SK-N-SH (cell line): ENCODE measurements at regions of chr17 and their contacts with region 1.

Region 1: GRCh38 chr17:32253117-32253611 is 12.5 kb upstream of the RHBDL3 start:
- DNase-seq: peak; percentile 82
- H3K4me3 ChIP-seq: no peak overlapping the region; a peak in 1 of 4 replicates
- H3K27ac ChIP-seq: no peak overlapping the region
- H3K4me1 ChIP-seq: no peaks in the 10 kb centered on the region
- H3K27me3 ChIP-seq: no peaks in the 10 kb centered on the region
- CTCF ChIP-seq: peak; percentile 98
- EP300 ChIP-seq: no peak
- RAD21 ChIP-seq: peak; percentile 99

Region 2: DNA sequence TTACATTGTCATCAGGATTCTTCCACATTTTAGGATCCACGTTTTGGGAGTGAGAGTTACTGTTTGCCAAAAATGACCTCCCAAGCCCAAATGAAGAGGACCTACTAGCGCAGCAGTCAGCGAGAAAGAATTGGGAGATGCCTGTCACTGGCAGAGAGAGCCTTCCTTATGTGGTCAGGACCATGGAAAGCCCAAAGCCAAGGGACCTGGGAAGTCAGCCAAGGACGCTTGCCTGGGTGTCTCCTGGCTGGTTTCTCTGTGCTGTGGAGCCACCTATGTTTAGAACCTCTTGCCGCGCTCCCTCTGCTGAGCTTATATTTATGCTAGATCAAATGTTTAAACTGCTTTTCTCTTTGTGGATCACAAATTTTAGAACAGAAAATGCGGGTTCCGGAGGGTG is 12.4 kb before region 1 on chr17:
- CTCF ChIA-PET with region 1: interaction called, 22 read pairs
- POLR2A ChIA-PET with region 1: no interaction called
- DNase-seq: no peak
- H3K4me3 ChIP-seq: no peak overlapping the region
- H3K27ac ChIP-seq: no peak overlapping the region
- H3K4me1 ChIP-seq: no peaks in the 10 kb centered on the region; a peak in 1 of 4 replicates
- H3K27me3 ChIP-seq: no peaks in the 10 kb centered on the region
- CTCF ChIP-seq: no peak
- EP300 ChIP-seq: no peak
- RAD21 ChIP-seq: no peak

Region 3: DNA sequence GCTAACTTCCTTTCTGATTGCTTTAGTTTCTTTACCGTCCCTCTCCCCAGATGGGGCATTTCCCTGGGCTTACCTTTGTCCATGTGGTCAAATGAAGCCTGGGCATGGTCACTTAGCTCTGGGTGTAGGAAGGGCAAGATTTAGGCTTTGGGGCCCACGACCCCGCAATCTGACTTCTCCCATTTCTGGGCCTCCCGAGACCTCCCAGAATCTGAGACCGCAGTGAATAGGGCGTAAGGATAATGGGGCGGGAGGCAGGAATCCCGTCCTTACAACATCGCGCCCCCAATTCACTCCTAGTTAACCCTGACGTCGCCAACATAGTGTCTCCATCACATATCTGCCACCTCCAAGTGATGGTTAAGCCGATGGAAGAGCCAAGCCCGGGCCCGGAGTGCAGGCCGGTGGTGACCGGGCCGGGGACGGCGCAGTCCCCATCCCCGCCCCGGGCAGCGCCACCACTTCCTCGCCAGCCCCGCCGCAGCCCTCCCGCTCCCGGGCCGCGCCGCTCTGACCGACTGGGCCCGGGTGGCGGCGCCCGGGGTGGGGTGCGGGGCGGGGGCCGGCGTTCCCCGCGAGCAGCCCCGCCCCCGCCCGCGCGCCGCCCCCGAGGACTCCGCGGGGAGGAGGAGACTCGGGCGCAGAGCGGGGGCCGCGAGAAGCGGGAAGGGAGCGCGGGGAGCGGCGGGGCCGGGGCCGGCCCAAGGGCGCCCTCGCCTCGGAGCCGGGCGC is 12.2 kb after region 1 on chr17 and contains the start of gene RHBDL3:
- CTCF ChIA-PET with region 1: interaction called, 25 read pairs
- POLR2A ChIA-PET with region 1: no interaction called
- DNase-seq: peak; percentile 89
- H3K4me3 ChIP-seq: peak within 1 kb of the TSS; percentile 60 to 64
- H3K27ac ChIP-seq: no peak within 1 kb of the TSS; a peak in 1 of 4 replicates
- H3K4me1 ChIP-seq: peaks cover 0 to 10% of the 10 kb centered on the region in 2 experiments; a peak in 1 of 4 replicates
- H3K27me3 ChIP-seq: peaks cover 7% of the 10 kb centered on the region; the same call in 1 of the 2 replicates
- CTCF ChIP-seq: no peak
- EP300 ChIP-seq: no peak
- RAD21 ChIP-seq: no peak
- polyA plus RNA-seq, gene RHBDL3: 0.39 and 0.72 TPM in 2 replicates

Region 4: GRCh38 chr17:32281011-32281451 is 27.9 kb after region 1 on chr17:
- CTCF ChIA-PET with region 1: interaction called, 13 read pairs
- POLR2A ChIA-PET with region 1: interaction called, 3 read pairs
- DNase-seq: no peak
- H3K4me3 ChIP-seq: no peak overlapping the region
- H3K27ac ChIP-seq: no peak overlapping the region
- H3K4me1 ChIP-seq: peaks cover 0 to 21% of the 10 kb centered on the region in 2 experiments; a peak in 1 of 4 replicates
- H3K27me3 ChIP-seq: no peaks in the 10 kb centered on the region
- CTCF ChIP-seq: no peak
- EP300 ChIP-seq: no peak
- RAD21 ChIP-seq: no peak

Region 5: GRCh38 chr17:32311028-32311536 is 57.9 kb after region 1 on chr17:
- CTCF ChIA-PET with region 1: interaction called, 192 read pairs
- POLR2A ChIA-PET with region 1: no interaction called
- DNase-seq: peak; percentile 72
- H3K4me3 ChIP-seq: no peak overlapping the region
- H3K27ac ChIP-seq: peak overlapping the region in 1 of 2 experiments; percentile 60; a peak in 1 of 4 replicates
- H3K4me1 ChIP-seq: peaks cover 0 to 4% of the 10 kb centered on the region in 2 experiments; a peak in 1 of 4 replicates
- H3K27me3 ChIP-seq: no peaks in the 10 kb centered on the region
- CTCF ChIP-seq: no peak
- EP300 ChIP-seq: no peak
- RAD21 ChIP-seq: no peak

Region 6: DNA sequence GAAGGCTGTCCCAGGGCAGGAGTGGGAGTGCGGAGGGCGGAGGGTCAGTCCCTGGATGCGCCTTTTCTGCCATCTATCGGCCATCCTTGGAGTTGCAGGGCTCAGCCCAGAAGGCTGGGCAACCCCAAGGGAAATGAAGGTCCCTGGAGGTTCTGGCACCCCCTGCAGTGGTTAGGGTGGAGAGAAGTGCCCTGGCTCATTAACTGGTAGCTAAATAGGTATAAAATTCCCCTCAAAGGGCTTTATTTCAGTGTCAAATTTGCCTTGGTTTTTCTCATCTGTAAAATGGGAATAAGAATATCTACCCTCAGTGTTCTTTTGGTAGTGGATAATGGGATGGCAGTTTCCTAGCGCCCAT is 66.4 kb after region 1 on chr17:
- CTCF ChIA-PET with region 1: interaction called, 192 read pairs
- POLR2A ChIA-PET with region 1: no interaction called
- DNase-seq: peak; percentile 89
- H3K4me3 ChIP-seq: no peak overlapping the region; a peak in 1 of 4 replicates
- H3K27ac ChIP-seq: no peak overlapping the region
- H3K4me1 ChIP-seq: peaks cover 7 to 8% of the 10 kb centered on the region in 2 experiments; a peak in 1 of 4 replicates
- H3K27me3 ChIP-seq: no peaks in the 10 kb centered on the region
- CTCF ChIP-seq: peak; percentile 96
- EP300 ChIP-seq: no peak
- RAD21 ChIP-seq: peak; percentile 94

Region 7: GRCh38 chr17:32331243-32332040 is 78.3 kb after region 1 on chr17:
- CTCF ChIA-PET with region 1: interaction called, 192 read pairs
- POLR2A ChIA-PET with region 1: no interaction called
- DNase-seq: no peak
- H3K4me3 ChIP-seq: no peak overlapping the region
- H3K27ac ChIP-seq: no peak overlapping the region
- H3K4me1 ChIP-seq: peaks cover 0 to 6% of the 10 kb centered on the region in 2 experiments; a peak in 1 of 4 replicates
- H3K27me3 ChIP-seq: no peaks in the 10 kb centered on the region
- CTCF ChIP-seq: no peak
- EP300 ChIP-seq: no peak
- RAD21 ChIP-seq: no peak